Natural killer cell (primary cell): ENCODE measurements at regions of chr12 and their contacts with region 1.

Region 1: GRCh38 chr12:95998611-95999286 is 2.6 kb upstream of the HAL start:
- DNase-seq: peak in 1 of 2 donors; percentile 79
- ATAC-seq: peak; percentile 92 to 98 (median 95)
- H3K4me3 ChIP-seq: no peak overlapping the region
- H3K4me3 Mint-ChIP-seq: no peak overlapping the region
- H3K27ac ChIP-seq: peak overlapping the region; percentile 27
- H3K27ac Mint-ChIP-seq: no peak overlapping the region
- H3K4me1 ChIP-seq: no peaks in the 10 kb centered on the region
- H3K4me1 Mint-ChIP-seq: peaks cover 7% of the 10 kb centered on the region in 2 donors
- H3K27me3 ChIP-seq: no peaks in the 10 kb centered on the region
- H3K27me3 Mint-ChIP-seq: no peaks in the 10 kb centered on the region
- CTCF ChIP-seq: peak; percentile 60

Region 2: DNA sequence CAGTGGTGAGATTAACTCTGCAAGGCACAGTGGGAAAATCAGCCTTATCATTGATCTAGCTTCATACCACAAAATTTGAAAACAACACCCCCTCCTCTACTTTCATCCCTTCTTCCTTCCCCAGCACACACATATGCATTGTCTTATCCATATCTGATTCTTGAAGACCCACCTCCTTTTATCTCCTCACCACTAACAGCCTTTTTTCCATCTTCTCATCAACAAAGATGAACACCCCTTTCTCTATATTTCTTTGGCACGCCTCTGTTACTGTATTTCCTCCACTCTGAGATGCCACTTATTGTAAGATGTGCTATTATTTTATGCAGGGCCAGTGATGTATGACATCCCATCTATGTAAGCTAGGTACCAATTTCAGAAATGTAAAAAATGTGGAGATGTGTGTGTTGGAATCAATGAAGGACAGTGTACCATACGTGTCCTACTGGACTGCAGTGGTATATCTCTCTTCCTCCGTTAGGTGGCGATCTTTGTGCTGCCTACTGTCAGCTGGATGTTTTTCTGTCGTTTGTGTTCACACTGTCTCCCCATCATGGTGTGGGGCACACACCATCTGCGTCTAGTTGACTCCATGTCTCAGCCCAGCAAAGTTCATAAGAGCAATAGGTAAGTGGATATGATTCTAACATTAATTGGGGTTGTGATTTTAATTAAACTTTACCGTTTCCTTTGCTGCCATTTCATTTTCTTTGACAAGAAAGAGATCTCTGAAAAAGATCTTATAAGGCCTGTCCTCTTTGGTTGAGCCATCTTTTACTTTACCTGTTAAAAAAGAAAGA is 80.4 kb before region 1 on chr12:
- intact Hi-C with region 1: loop called (anchors 1 kb)
- DNase-seq: peak in 1 of 2 donors; percentile 78
- ATAC-seq: peak; percentile 89 to 97 (median 97)
- H3K4me3 ChIP-seq: no peak overlapping the region
- H3K4me3 Mint-ChIP-seq: no peak overlapping the region
- H3K27ac ChIP-seq: no peak overlapping the region
- H3K27ac Mint-ChIP-seq: no peak overlapping the region
- H3K4me1 ChIP-seq: no peaks in the 10 kb centered on the region
- H3K4me1 Mint-ChIP-seq: no peaks in the 10 kb centered on the region
- H3K27me3 ChIP-seq: no peaks in the 10 kb centered on the region
- H3K27me3 Mint-ChIP-seq: peaks cover 10 to 17% of the 10 kb centered on the region in 2 donors
- CTCF ChIP-seq: peak; percentile 90